A673 (cell line): ENCODE measurements at regions of chr11 and their contacts with region 1.

Region 1: GRCh38 chr11:62694455-62695167 is 5.3 kb upstream of the LRRN4CL start:
- DNase-seq: peak; percentile 91
- H3K4me3 ChIP-seq: no peak overlapping the region
- H3K27ac ChIP-seq: peak overlapping the region; percentile 4
- H3K4me1 ChIP-seq: peaks cover 5% of the 10 kb centered on the region
- H3K27me3 ChIP-seq: no peaks in the 10 kb centered on the region
- CTCF ChIP-seq: peak; percentile 98

Region 2: DNA sequence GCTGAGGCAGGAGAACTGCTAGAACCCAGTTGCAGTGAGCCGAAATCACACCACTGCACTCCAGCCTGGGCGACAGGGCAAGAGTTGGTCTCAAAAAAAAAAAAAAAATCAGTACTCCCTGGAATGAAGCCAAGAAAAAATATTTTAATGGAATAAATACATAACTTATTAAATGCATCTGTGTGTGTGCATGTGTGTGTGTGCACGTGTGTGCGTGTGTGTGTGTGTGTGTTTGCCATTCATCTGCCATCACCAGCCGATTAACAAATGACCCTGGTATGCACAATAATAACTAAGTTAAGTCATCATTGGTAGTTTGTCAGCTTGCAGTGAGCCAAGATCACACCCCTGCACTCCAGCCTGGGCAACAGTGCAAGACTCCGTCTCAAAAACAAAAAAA is 310.8 kb before region 1 on chr11:
- CTCF ChIA-PET with region 1: interaction called, 12 read pairs
- POLR2A ChIA-PET with region 1: no interaction called
- intact Hi-C with region 1: no loop called
- DNase-seq: no peak
- H3K4me3 ChIP-seq: no peak overlapping the region
- H3K27ac ChIP-seq: no peak overlapping the region
- H3K4me1 ChIP-seq: no peaks in the 10 kb centered on the region
- H3K27me3 ChIP-seq: no peaks in the 10 kb centered on the region
- CTCF ChIP-seq: no peak

Region 3: GRCh38 chr11:62678770-62679696 is 15.6 kb before region 1 on chr11 and contains the start of gene UBXN1:
- CTCF ChIA-PET with region 1: interaction called, 11 read pairs
- POLR2A ChIA-PET with region 1: no interaction called
- intact Hi-C with region 1: no loop called
- DNase-seq: peak; percentile 98
- H3K4me3 ChIP-seq: peak within 1 kb of the TSS; percentile 85
- H3K27ac ChIP-seq: peak within 1 kb of the TSS; percentile 84
- H3K4me1 ChIP-seq: peaks cover 23% of the 10 kb centered on the region
- H3K27me3 ChIP-seq: no peaks in the 10 kb centered on the region
- CTCF ChIP-seq: no peak
- total RNA-seq, gene UBXN1: 143 and 147 TPM in 2 replicates

Region 4: GRCh38 chr11:62713343-62713742 is 18.7 kb after region 1 on chr11:
- CTCF ChIA-PET with region 1: no interaction called
- POLR2A ChIA-PET with region 1: no interaction called
- intact Hi-C with region 1: no loop called
- DNase-seq: no peak
- H3K4me3 ChIP-seq: no peak overlapping the region
- H3K27ac ChIP-seq: peak overlapping the region; percentile 33
- H3K4me1 ChIP-seq: peaks cover 17% of the 10 kb centered on the region
- H3K27me3 ChIP-seq: no peaks in the 10 kb centered on the region
- CTCF ChIP-seq: no peak